ENCODE measurements at regions of chr1 and their contacts with region 1.

Region 1: DNA sequence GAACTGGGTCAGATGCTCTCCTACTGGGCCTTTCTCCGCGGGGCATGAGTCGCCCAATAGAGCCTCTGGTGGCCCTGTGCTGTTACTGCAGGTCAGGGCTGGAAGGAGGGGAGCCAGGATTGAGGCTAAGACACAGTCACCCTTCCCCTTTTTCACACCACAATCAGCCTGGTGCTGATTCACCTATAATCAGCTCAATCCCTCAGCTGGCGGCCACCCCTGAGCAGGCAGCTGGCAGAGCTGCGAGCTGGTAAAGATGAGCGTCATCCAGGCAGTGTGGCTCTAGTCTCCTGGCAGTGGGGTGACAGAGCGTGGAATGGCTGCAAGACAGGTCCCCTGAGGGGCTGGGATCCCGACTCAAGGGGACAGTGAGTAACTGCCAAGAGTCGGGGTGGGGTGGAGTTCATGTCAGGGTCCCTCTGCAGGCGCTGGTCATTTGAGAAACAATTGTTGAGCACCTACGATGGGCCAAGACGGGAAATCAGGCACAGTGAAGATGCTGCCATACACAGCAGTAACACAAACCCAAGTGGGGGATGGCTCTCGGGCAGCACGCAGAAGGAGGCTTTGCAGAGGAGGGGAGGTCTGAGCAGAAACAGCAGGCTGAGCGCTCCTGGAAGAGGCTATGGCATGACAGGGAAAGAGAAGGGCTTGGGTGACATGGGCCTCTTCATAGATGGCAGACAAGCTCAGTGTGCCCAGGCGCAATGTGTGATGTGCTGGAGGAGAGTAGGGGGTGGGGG is 21.8 kb downstream of the ATF3 start:
- DNase-seq: no peak
- H3K4me3 ChIP-seq: no peak overlapping the region
- H3K27me3 ChIP-seq: peaks cover 12% of the 10 kb centered on the region
- CTCF ChIP-seq: peak; percentile 88

Region 2: DNA sequence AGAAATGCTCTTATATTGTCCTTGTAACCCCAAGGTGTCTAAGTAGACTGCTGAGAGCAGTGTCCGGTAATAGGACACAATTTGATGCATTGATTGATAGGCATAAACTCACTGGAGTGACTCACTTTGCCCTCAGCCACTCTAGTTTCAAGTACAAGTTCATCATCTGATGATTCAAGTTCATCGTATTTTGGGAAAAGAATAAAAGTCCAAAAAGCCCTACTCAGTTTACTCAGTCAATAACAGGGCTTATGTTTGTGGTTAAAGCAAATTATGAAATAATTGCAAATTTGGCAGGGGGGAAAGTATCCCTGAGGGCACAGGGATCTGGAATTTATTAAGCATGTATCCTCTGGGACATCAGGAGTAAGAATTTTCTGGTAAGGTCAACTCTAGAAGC is 29.3 kb before region 1 on chr1:
- CTCF ChIA-PET with region 1: no interaction called
- POLR2A ChIA-PET with region 1: no interaction called
- DNase-seq: no peak
- H3K4me3 ChIP-seq: no peak overlapping the region
- H3K27me3 ChIP-seq: peaks cover 28% of the 10 kb centered on the region
- CTCF ChIP-seq: no peak

Region 3: GRCh38 chr1:212618501-212619405 is 11.6 kb before region 1 on chr1:
- CTCF ChIA-PET with region 1: interaction called, 31 read pairs
- POLR2A ChIA-PET with region 1: no interaction called
- DNase-seq: no peak
- H3K4me3 ChIP-seq: no peak overlapping the region
- H3K27me3 ChIP-seq: no peaks in the 10 kb centered on the region
- CTCF ChIP-seq: no peak

Region 4: DNA sequence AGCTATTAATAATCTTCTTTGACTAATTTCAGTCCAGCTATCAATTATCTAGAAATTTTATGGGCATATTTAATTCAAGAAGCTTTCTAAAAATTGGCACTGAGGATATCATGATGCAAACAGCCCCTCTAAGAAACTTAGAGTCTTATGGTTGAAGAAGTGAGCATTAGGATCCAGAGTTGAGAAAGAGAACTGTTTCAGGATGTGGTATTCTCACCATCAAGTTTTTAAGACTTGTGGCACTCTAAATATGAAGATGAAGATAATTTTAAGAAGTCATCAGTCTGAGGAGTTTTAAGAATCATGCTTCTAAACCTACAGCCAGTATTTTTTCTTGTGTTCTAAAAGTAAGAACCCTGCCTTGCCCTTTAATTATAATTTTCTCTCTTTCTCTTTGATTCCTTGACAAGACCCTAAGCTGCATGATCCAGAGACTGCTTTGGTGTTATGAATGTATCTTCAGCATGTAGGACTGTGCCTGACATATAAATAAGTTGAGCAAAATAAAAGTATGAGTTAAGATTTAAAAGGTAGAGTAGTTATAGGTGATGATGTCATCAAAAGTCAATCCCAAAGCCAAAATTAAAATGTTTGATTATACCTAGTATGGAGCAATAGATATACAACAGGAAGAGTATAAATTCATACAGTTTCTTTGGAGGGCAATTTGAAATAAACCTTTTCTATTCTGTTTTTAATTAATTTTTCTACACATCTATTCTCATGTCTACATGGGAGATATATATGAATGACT is 459.8 kb after region 1 on chr1:
- CTCF ChIA-PET with region 1: no interaction called
- POLR2A ChIA-PET with region 1: no interaction called
- DNase-seq: no peak
- H3K4me3 ChIP-seq: no peak overlapping the region
- H3K27me3 ChIP-seq: no peaks in the 10 kb centered on the region
- CTCF ChIP-seq: no peak

Measured in BJ (cell line).